ENCODE measurements at regions of chr6 and their contacts with region 1.

Region 1: GRCh38 chr6:125844989-125845388 is 54.2 kb downstream of the NCOA7 start:
- DNase-seq: peak in 1 of 2 donors; percentile 65
- ATAC-seq: peak; percentile 86 to 92 (median 90)
- H3K4me3 ChIP-seq: peak overlapping the region in 1 of 10 donors; percentile 0
- H3K27ac ChIP-seq: peak overlapping the region in 9 of 10 donors; percentile 11 to 68 (median 51)
- H3K4me1 ChIP-seq: peaks cover 2 to 39% (median 31%) of the 10 kb centered on the region in 9 donors
- H3K27me3 ChIP-seq: no peaks in the 10 kb centered on the region
- CTCF ChIP-seq: no peak

Region 2: GRCh38 chr6:125728739-125729138 is 116.2 kb before region 1 on chr6:
- intact Hi-C with region 1: no loop called
- DNase-seq: no peak
- ATAC-seq: no peak
- H3K4me3 ChIP-seq: no peak overlapping the region
- H3K27ac ChIP-seq: no peak overlapping the region
- H3K4me1 ChIP-seq: no peaks in the 10 kb centered on the region
- H3K27me3 ChIP-seq: no peaks in the 10 kb centered on the region
- CTCF ChIP-seq: no peak

Region 3: GRCh38 chr6:125812394-125813292 is 32.3 kb before region 1 on chr6:
- intact Hi-C with region 1: loop called in 1 of 10 experiments (anchors 5 kb)
- DNase-seq: no peak
- ATAC-seq: peak; percentile 63 to 87 (median 77)
- H3K4me3 ChIP-seq: peak overlapping the region in 2 of 10 donors; percentile 3 to 24
- H3K27ac ChIP-seq: peak overlapping the region in 9 of 10 donors; percentile 1 to 74 (median 61)
- H3K4me1 ChIP-seq: peaks cover 4 to 72% (median 42%) of the 10 kb centered on the region in 9 donors
- H3K27me3 ChIP-seq: no peaks in the 10 kb centered on the region
- CTCF ChIP-seq: no peak

Measured in heart right ventricle (tissue), 16 donors.